Ovary (tissue), 10 donors: ENCODE measurements at regions of chr12 and their contacts with region 1.

Region 1: DNA sequence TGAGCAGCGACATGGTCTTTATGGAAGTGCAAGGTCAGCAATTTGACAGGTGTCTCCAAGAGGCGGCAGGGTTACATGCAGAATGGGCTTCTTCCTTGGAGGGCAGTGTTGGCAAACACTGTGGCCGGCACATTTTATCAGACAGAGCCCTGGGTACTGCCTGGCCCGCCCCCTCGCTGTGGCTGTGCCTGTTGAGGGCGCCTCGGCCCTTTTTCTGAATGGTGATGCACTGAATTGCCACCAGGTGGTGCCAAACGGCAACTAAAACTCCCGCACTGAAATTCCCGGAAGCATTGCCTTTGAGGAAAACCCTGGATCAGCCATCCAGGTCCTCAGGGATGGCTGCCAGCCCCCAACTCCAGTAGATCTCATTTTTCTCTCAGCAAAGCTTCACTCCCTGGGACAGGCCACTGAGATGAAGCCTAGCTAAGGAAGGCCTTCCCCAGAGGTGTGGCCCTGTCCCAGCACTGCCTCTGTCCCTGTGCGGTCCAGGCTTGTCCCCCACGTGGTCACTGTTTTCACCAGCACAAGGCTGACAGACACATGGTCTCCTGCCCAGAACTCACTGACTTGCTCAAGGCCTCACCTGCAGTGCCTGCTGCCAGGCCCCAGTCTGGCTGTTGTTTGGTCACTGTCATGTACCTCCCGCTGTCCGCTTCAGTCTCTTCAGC is 73.6 kb downstream of the TESC start:
- DNase-seq: peak; percentile 71 to 86 (median 77)
- H3K4me3 ChIP-seq: no peak overlapping the region
- H3K27ac ChIP-seq: peak overlapping the region in 1 of 2 donors; percentile 56
- H3K4me1 ChIP-seq: peaks cover 3% of the 10 kb centered on the region
- H3K27me3 ChIP-seq: no peaks in the 10 kb centered on the region
- CTCF ChIP-seq: peak; percentile 80 to 84 (median 83)
- EP300 ChIP-seq: no peak
- POLR2A ChIP-seq: no peak

Region 2: GRCh38 chr12:117119592-117120198 is 94.1 kb after region 1 on chr12:
- intact Hi-C with region 1: loop called in 2 of 4 experiments (anchors 5 to 10 kb)
- DNase-seq: no peak
- H3K4me3 ChIP-seq: no peak overlapping the region
- H3K27ac ChIP-seq: no peak overlapping the region
- H3K4me1 ChIP-seq: no peaks in the 10 kb centered on the region
- H3K27me3 ChIP-seq: no peaks in the 10 kb centered on the region
- CTCF ChIP-seq: peak in 1 of 3 donors; percentile 36
- EP300 ChIP-seq: no peak
- POLR2A ChIP-seq: no peak

Region 3: DNA sequence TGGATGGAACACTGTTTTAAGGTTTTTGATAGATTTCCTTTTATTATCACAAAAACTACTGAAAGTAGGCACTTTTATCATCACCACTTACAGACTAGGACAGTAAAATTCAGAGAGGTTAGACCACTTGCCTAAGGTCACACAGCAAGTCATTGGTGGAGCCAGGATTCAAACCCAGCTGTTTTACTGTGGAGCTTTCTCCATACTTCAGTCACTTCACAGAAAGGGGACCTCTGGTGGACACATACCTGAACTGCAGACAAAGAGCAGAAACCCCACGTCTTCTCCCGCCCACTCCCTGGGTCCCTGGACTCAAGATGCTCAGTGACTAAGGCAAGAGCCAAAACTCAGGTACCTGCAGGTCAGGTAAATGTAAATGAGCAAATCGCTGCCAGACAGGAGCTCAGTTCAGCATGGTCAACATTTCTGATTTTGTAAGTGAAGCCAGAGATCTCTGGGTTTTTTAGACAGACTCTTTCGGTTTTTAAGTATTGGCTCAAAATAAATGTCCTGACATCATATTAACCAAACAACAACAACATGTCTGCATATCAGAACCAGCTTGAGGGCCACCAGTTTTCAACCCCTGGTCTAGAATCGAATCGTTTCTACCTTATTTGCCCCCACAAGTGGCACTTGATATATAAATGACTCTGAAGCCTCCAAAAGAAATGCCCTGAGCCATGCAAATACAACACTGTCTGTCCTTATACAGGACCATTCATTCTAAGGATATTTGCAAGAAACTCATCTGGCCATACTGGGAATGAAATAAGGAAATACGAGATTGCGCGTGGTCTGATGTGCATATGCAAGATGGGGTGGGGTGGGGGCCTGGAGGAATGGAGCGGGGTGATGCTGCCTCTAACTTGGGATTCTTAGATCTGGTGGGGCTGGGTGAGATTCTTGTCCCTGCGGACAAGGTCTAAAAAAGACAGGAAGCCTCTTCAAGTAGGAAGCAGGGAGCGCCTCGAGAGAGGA is 832.3 kb after region 1 on chr12:
- intact Hi-C with region 1: loop called in 1 of 4 experiments (anchors 10 kb)
- DNase-seq: no peak
- H3K4me3 ChIP-seq: no peak overlapping the region
- H3K27ac ChIP-seq: no peak overlapping the region
- H3K4me1 ChIP-seq: no peaks in the 10 kb centered on the region
- H3K27me3 ChIP-seq: no peaks in the 10 kb centered on the region
- CTCF ChIP-seq: no peak
- EP300 ChIP-seq: no peak
- POLR2A ChIP-seq: no peak